Posterior cingulate gyrus (tissue), 11 donors: ENCODE measurements at regions of chr7 and their contacts with region 1.

Region 1: DNA sequence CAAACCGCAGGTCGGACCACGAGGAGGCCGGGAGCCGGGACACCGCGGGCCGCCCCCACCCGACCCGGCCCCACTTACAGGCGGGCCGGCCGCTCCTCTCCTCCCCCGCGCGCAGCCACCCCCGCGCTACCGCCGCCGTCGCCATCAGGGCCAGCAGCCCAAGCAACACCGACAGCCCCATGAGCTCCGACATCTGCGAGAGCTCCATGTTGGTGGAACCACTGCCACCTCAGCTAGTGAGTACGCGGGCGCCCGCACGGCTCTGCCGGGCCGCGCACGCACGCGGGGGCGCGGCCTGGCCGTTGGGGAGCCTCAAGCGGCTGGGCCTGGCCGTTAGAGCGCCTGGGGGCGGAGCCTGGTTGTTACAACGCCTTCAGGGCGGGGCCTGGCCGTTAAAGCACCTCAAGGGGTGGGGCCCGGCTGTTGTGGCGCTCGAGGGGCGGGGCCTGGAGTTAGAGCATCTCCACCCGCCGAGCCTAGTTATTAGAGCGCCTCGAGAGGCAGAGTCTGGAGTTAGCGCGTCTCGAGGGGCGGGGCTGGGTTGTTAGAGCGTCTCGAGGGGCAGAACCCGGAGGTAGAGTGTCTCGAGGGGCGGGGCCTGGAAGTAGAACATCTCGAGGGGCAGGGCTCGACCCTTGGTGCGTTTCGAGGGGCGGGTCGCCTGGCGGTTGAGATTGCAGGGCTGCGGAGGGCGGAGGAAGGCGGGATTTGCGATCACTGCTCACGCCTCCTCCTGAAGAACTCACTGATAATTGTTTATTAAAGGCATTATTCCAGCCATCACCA is at the start of gene TBL2:
- DNase-seq: peak; percentile 92 to 100 (median 98)

Region 2: GRCh38 chr7:73522105-73522872 is 56.2 kb before region 1 on chr7 and contains the start of gene BAZ1B:
- intact Hi-C with region 1: loop called (anchors 1 kb)
- DNase-seq: peak; percentile 96 to 100 (median 98)